ENCODE measurements at regions of chr4 and their contacts with region 1.

Region 1: DNA sequence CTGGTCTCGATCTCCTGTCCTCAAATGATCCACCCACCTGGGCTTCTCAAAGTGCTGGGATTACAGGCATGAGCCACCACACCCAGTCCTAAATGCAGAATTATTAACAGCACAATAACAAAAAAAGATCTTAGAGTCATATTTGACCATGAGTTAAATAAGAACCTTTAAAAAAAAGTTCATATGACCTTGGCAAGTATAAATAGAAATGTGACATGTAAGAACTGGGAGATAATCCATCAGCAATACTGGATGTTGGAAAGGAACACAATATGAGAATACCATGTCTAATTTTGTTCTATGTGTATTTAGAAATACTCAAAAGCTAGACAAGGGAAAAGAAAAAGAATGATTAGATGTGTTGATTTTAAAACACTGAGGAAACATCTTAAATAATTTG is 231.6 kb downstream of the RAPGEF2 start:
- DNase-seq: no peak
- ATAC-seq: peak; percentile 64

Region 2: GRCh38 chr4:159232465-159233106 is 101.9 kb before region 1 on chr4:
- intact Hi-C with region 1: loop called (anchors 10 kb)
- DNase-seq: no peak
- ATAC-seq: no peak

Region 3: GRCh38 chr4:159290321-159291030 is 44.0 kb before region 1 on chr4:
- intact Hi-C with region 1: loop called (anchors 5 kb)
- DNase-seq: no peak
- ATAC-seq: no peak

Region 4: DNA sequence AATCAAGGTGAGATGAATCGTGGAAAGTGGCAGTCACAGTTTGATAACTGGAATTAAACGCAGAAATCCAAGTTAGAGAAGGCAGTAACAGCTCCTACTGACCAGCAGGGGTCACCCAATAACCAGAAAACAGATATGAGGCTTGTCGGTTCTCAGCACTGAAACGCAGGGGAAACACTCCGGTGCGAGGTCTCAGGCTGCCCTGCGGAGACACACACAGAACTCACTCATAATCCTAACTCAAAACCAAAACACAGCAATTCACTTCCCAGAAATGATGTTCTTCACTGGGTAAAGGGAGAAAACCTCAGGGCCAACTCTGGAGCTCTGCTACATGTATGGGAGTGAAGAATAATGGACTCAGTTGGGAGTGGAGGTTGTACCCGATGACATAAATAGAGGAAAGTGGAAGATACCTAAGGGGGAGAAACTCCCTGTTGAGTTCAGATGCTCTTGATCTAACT is 152.9 kb after region 1 on chr4:
- intact Hi-C with region 1: no loop called
- DNase-seq: no peak
- ATAC-seq: no peak